Transverse colon (tissue), 4 donors: ENCODE measurements at regions of chr2 and their contacts with region 1.

Region 1: DNA sequence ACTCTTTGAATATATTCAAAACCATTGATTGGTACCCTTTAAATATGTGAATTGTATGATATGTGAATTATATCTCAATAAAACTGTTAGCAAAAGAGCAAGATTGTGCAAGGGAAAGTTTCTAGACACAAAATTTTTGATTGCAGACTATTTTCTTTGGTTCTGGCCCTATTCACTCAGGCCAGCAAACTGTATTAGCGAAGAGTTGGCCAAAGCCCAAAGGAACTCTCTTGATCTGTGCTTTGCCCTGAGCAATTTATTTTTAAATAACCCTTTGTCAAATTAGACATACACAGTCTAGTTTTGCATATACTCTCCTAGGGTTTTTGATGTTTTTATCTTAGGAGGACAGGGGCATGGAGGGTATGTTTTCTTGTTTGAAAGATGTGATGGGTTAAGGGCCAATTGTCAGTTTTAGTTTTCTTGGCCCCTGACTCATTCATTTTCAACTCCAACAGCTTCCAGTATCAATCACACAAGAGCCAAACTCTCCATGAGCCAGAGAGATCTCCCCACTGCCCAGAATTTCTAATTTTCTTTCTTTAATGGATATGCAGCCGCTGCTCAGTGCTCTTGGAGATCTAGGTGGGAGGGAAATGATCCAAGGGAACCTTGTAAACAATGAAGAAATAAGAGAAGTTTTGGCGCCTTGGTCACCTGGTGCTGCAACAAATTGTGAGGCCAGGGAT is 231.5 kb downstream of the SRBD1 start:
- DNase-seq: no peak
- H3K4me3 ChIP-seq: no peak overlapping the region
- H3K27ac ChIP-seq: no peak overlapping the region
- H3K4me1 ChIP-seq: peaks cover 0 to 8% (median 0%) of the 10 kb centered on the region in 4 donors
- H3K27me3 ChIP-seq: no peaks in the 10 kb centered on the region
- CTCF ChIP-seq: no peak
- EP300 ChIP-seq: no peak
- POLR2A ChIP-seq: no peak

Region 2: GRCh38 chr2:45307147-45307546 is 72.4 kb before region 1 on chr2:
- in situ Hi-C with region 1: no loop called
- intact Hi-C with region 1: loop called (anchors 2 kb)
- DNase-seq: no peak
- H3K4me3 ChIP-seq: no peak overlapping the region
- H3K27ac ChIP-seq: no peak overlapping the region
- H3K4me1 ChIP-seq: no peaks in the 10 kb centered on the region
- H3K27me3 ChIP-seq: peaks cover 26% of the 10 kb centered on the region
- CTCF ChIP-seq: no peak
- EP300 ChIP-seq: no peak
- POLR2A ChIP-seq: no peak

Region 3: GRCh38 chr2:45821564-45822271 is 442.2 kb after region 1 on chr2:
- in situ Hi-C with region 1: no loop called
- intact Hi-C with region 1: no loop called
- DNase-seq: peak; percentile 69
- H3K4me3 ChIP-seq: no peak overlapping the region
- H3K27ac ChIP-seq: peak overlapping the region; percentile 1 to 76 (median 65)
- H3K4me1 ChIP-seq: peaks cover 3 to 25% (median 12%) of the 10 kb centered on the region in 4 donors
- H3K27me3 ChIP-seq: no peaks in the 10 kb centered on the region
- CTCF ChIP-seq: no peak
- EP300 ChIP-seq: no peak
- POLR2A ChIP-seq: no peak